Activated CD4-positive, alpha-beta T cell treated with anti-CD3 and anti-CD28 coated beads, Interleukin-2, amount 10 ng/mL, durations not matched to agents 24 days and 14 days (primary cell): ENCODE measurements at regions of chr20 and their contacts with region 1.

Region 1: DNA sequence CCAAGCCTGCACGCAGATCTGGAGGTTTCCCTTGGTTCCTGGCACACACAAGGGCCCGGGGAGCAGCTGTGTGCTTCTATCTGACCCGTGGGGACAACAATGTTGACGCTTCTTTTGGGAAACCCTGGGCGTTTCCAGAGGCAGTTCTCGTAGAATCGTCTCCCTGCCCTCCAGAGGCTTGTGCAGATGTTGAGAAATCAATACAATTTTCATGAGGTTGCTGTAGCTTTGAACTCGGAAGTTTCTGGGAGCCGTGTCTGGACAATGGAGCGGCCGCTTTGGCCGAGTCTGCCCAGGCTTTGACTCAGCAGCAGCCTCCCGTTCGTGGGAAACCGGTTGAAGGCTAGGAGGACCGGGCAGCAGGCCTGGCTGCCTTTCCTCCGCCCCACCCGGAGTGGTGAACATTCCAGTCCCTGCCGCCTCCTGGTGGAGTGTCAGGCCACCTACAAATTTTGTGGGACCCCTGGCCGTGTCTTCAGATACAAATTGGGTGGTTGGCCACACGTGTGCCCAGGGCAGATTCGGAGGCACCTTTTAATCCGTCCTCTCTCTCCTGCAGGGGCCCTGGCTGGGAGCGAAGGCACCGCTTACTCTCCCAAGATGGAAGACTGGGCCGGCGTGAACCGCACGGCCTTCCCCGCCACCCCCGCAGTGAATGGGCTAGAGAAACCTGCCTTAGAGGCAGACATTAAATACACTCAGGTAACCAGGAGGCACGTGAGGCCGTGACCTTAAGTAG is 2.7 kb downstream of the PAX1 start:
- DNase-seq: no peak
- H3K4me3 Mint-ChIP-seq: no peak overlapping the region
- H3K27ac Mint-ChIP-seq: no peak overlapping the region
- H3K4me1 Mint-ChIP-seq: no peaks in the 10 kb centered on the region
- H3K27me3 Mint-ChIP-seq: peaks cover 75% of the 10 kb centered on the region

Region 2: GRCh38 chr20:20375862-20376261 is 1332.3 kb before region 1 on chr20:
- intact Hi-C with region 1: no loop called
- DNase-seq: no peak
- H3K4me3 Mint-ChIP-seq: no peak overlapping the region
- H3K27ac Mint-ChIP-seq: no peak overlapping the region
- H3K4me1 Mint-ChIP-seq: peaks cover 6% of the 10 kb centered on the region
- H3K27me3 Mint-ChIP-seq: peaks cover 54% of the 10 kb centered on the region

Region 3: GRCh38 chr20:21520702-21521595 is 187.2 kb before region 1 on chr20:
- intact Hi-C with region 1: loop called (anchors 2 kb)
- DNase-seq: peak; percentile 61
- H3K4me3 Mint-ChIP-seq: peak overlapping the region; percentile 23
- H3K27ac Mint-ChIP-seq: peak overlapping the region; percentile 80
- H3K4me1 Mint-ChIP-seq: peaks cover 18% of the 10 kb centered on the region
- H3K27me3 Mint-ChIP-seq: peaks cover 87% of the 10 kb centered on the region

Region 4: DNA sequence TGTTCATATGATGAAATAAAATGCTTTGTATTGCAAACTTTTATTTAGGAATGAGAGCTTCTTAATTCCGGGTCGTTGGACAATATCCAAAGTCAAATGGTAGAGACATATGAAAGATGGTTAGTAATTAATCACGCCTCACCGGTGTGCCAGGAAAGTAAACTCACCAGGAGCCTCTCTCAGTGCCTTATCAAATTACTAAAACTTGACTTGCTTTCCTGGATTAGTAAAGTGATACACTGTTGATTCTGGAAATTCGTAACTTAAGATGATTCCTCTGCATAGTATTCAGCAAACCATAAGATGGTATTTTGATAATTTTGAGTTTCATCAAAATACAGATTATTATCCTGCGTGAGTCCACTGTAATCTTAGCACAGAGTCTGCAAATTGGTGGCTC is 112.5 kb after region 1 on chr20:
- intact Hi-C with region 1: no loop called
- DNase-seq: no peak
- H3K4me3 Mint-ChIP-seq: no peak overlapping the region
- H3K27ac Mint-ChIP-seq: no peak overlapping the region
- H3K4me1 Mint-ChIP-seq: no peaks in the 10 kb centered on the region
- H3K27me3 Mint-ChIP-seq: no peaks in the 10 kb centered on the region